ENCODE measurements at regions of chr20 and their contacts with region 1.

Region 1: GRCh38 chr20:57654363-57654997 is 34.3 kb upstream of the ZBP1 start:
- DNase-seq: peak; percentile 70

Region 2: DNA sequence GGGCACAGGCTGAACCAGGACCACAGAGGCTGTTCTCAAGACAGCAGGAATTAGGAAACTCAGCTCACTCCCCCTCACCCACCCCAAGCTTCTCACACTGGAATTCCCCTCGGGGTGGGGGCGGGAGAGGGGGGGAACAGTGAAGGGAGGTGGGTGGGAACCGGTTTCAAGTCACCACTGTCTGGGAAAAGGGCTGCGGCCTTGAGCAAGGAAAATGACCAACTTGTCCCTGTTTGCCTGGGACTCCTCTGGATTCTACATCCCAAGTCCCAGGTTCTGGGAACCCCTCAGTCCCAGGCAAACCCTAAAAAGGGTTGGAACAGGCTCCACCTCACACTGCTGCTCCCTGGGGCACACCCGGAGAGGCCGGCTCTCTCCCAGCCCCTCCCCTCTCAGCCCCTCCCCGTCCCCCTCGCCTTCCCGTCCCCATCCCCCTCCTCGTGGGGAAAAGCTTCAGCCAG is 794.6 kb before region 1 on chr20:
- intact Hi-C with region 1: no loop called
- DNase-seq: no peak

Region 3: DNA sequence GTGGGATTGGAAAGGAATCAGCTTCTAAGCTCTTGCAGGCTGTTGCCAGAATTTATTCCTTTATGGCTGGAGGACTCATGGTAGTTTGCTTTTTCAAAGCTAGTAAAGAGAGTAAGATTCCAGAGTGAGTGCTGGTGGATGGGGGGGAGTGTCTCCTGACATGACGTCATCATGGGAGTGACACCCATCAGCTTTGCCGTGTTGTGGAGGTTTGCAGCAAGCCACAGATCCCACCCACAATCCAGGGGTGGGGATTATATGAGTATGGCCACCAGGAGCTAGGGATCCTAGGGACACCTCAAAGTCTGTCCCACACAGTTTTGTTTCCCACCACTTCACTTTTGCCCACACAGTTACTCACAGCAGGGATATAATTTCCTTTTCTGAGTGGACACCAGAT is 84.0 kb after region 1 on chr20:
- intact Hi-C with region 1: no loop called
- DNase-seq: no peak

Region 4: GRCh38 chr20:58087193-58087858 is 432.8 kb after region 1 on chr20:
- intact Hi-C with region 1: loop called (anchors 5 kb)
- DNase-seq: peak; percentile 76

Region 5: DNA sequence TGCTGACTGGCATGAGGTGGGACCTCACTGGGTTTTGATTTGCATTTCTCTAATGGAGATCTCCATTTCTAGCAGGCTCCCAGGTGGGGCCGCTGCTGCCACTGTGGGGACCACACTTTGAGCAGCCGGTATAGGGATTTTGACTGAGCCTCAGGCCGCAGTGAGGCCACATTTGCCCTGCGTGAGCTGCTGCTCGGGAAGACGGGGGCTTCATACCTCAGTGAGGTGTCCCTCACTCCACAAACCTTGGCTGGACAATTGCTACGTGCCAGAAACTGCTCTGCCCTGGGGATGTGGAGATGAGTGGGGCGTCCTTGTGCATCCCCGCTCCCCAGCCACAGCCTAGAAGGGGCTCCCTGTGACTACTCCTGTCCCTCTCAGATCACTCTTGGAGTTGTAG is 439.7 kb after region 1 on chr20:
- intact Hi-C with region 1: loop called (anchors 5 kb)
- DNase-seq: peak; percentile 53

Region 6: DNA sequence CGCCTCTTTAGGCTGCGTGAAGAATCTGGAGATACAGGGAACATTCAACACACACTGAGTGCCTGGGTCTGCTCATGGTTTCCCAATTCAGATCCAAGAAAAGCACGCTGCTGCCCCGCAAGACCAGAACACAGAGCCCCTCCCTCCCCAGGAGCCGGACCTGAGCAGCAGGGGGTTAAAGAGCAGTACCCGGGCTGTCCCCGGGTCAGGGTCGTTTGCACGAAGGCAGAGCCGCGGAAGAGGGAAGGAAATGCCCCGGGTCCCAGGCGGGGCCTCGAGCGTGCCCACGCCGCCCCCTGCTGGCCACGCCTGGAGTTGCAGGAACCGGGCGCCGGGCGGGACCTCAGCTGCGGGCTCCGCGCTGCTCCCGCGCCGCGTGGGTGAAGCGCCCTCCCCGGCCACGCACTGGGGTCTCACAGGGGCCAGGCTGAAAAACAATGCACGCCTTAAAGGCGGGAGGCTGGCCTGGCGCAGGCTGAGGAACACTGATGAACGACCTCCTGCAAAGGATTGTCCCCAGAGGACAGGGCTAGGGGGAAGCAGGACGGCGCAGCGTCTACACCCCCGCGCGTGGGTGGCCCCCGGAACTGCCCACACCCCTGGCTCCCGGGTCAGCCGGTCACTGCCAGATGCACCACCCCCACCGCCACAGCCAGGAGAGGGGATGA is 525.1 kb after region 1 on chr20:
- intact Hi-C with region 1: loop called (anchors 1 to 5 kb)
- DNase-seq: peak; percentile 86